Naive thymus-derived CD4-positive, alpha-beta T cell (primary cell): ENCODE measurements at regions of chr9 and their contacts with region 1.

Region 1: GRCh38 chr9:137176302-137177182 is 4.7 kb upstream of the TMEM210 start:
- DNase-seq: peak in 1 of 9 donors; percentile 40
- ATAC-seq: peak; percentile 63
- H3K4me3 ChIP-seq: no peak overlapping the region
- H3K4me3 Mint-ChIP-seq: no peak overlapping the region
- H3K27ac ChIP-seq: no peak overlapping the region
- H3K27ac Mint-ChIP-seq: peak overlapping the region in 2 of 9 donors; percentile 33 to 65
- H3K4me1 ChIP-seq: no peaks in the 10 kb centered on the region
- H3K4me1 Mint-ChIP-seq: peaks cover 0 to 16% (median 5%) of the 10 kb centered on the region in 7 donors
- H3K27me3 ChIP-seq: no peaks in the 10 kb centered on the region
- H3K27me3 Mint-ChIP-seq: peaks cover 0 to 15% (median under 1%) of the 10 kb centered on the region in 5 donors

Region 2: GRCh38 chr9:137114610-137115391 is 61.7 kb before region 1 on chr9 and contains the start of gene DPP7:
- CTCF ChIA-PET with region 1: no interaction called
- POLR2A ChIA-PET with region 1: no interaction called
- intact Hi-C with region 1: loop called in 1 of 2 experiments (anchors 2 kb)
- DNase-seq: peak; percentile 63 to 88 (median 80)
- ATAC-seq: peak; percentile 93
- H3K4me3 ChIP-seq: peak within 1 kb of the TSS; percentile 54
- H3K4me3 Mint-ChIP-seq: peak within 1 kb of the TSS; percentile 38 to 82 (median 69)
- H3K27ac ChIP-seq: peak within 1 kb of the TSS; percentile 81
- H3K27ac Mint-ChIP-seq: peak within 1 kb of the TSS in 4 of 9 donors; percentile 24 to 78 (median 40)
- H3K4me1 ChIP-seq: peaks cover 0 to 4% of the 10 kb centered on the region in 2 donors
- H3K4me1 Mint-ChIP-seq: peaks cover 0 to 13% (median 6%) of the 10 kb centered on the region in 7 donors
- H3K27me3 ChIP-seq: no peaks in the 10 kb centered on the region
- H3K27me3 Mint-ChIP-seq: no peaks in the 10 kb centered on the region
- total RNA-seq, gene DPP7: 235 to 328 (median 298) TPM

Region 3: GRCh38 chr9:137326445-137327065 is 150.0 kb after region 1 on chr9:
- CTCF ChIA-PET with region 1: no interaction called
- POLR2A ChIA-PET with region 1: no interaction called
- intact Hi-C with region 1: no loop called
- DNase-seq: peak in 2 of 9 donors; percentile 28 to 37
- ATAC-seq: peak; percentile 94
- H3K4me3 ChIP-seq: no peak overlapping the region
- H3K4me3 Mint-ChIP-seq: peak overlapping the region; percentile 3 to 88 (median 63)
- H3K27ac ChIP-seq: no peak overlapping the region
- H3K27ac Mint-ChIP-seq: peak overlapping the region in 6 of 9 donors; percentile 22 to 89 (median 72)
- H3K4me1 ChIP-seq: no peaks in the 10 kb centered on the region
- H3K4me1 Mint-ChIP-seq: peaks cover 4 to 16% (median 9%) of the 10 kb centered on the region in 7 donors
- H3K27me3 ChIP-seq: peaks cover 0 to 14% of the 10 kb centered on the region in 2 donors
- H3K27me3 Mint-ChIP-seq: peaks cover 0 to 23% (median 2%) of the 10 kb centered on the region in 5 donors